HCT116 (cell line): ENCODE measurements at regions of chr7 and their contacts with region 1.

Region 1: DNA sequence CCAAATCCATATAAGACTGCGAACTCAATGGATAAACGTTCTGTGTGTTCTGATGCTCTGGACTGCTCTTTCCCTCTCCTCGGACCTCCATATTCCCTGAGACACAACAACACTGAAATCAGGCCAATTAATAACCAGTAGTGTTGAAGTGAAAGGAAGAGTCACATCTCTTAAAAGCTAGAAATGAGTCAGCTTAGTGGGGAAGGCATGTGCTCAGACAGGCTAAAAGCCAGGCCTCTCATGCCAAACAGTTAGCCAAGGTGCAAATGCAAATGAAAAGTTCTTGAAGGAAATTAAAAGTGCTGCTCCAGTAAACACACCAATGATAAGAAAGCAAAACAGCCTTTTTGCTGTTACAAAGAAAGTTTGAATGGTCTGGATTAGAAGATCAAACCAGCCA is 29.3 kb downstream of the TNS3 start:
- DNase-seq: no peak
- ATAC-seq: no peak
- H3K4me3 ChIP-seq: no peak overlapping the region
- H3K27ac ChIP-seq: no peak overlapping the region
- H3K4me1 ChIP-seq: peaks cover 27 to 33% of the 10 kb centered on the region in 2 experiments
- H3K27me3 ChIP-seq: no peaks in the 10 kb centered on the region
- CTCF ChIP-seq: no peak
- POLR2A ChIP-seq: no peak
- RAD21 ChIP-seq: no peak

Region 2: GRCh38 chr7:47100817-47101435 is 451.7 kb before region 1 on chr7:
- CTCF ChIA-PET with region 1: no interaction called
- POLR2A ChIA-PET with region 1: no interaction called
- RAD21 ChIA-PET with region 1: no interaction called
- intact Hi-C with region 1: no loop called
- DNase-seq: peak; percentile 61
- ATAC-seq: peak; percentile 98
- H3K4me3 ChIP-seq: peak overlapping the region; percentile 17 to 45; a peak in 3 of 4 replicates
- H3K27ac ChIP-seq: no peak overlapping the region
- H3K4me1 ChIP-seq: peaks cover 0 to 3% of the 10 kb centered on the region in 2 experiments; a peak in 1 of 4 replicates
- H3K27me3 ChIP-seq: no peaks in the 10 kb centered on the region
- CTCF ChIP-seq: peak; percentile 52 to 94 (median 89); a peak in 4 of 6 replicates
- POLR2A ChIP-seq: no peak
- RAD21 ChIP-seq: peak; percentile 69

Region 3: DNA sequence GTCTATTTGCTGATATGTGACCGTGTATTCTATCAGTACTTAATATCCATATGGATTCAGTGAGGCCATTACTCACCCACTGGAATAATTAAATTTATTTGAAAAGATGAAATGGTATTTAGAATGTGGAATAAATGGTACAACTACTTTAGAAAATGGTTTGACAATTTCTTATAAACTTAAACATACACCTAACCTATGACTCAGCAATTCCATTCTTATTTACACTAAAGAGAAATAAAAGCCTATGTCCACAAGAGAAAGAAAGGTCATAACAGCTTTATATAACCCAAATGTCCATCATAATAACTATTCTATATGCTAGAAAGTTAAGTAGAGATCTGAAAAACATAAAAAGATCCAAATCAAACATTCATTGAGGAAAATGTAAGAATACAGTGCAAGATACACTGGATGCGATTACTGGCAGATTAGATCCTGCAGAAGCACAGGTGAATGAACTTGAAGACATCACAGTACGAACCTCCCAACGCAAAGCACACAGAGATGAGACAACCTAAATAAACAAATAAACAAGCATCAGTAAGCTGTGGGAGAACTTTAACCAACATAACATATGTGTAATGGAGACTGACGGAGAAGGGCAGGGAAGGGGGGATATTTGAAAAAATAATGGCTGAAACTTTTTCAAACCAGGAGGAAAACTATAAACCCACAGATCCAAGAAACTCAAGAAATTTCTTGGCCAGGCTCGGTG is 22.6 kb before region 1 on chr7:
- CTCF ChIA-PET with region 1: no interaction called
- POLR2A ChIA-PET with region 1: no interaction called
- RAD21 ChIA-PET with region 1: no interaction called
- intact Hi-C with region 1: loop called (anchors 1 kb)
- DNase-seq: no peak
- ATAC-seq: no peak
- H3K4me3 ChIP-seq: no peak overlapping the region
- H3K27ac ChIP-seq: no peak overlapping the region
- H3K4me1 ChIP-seq: peaks cover 2 to 8% of the 10 kb centered on the region in 2 experiments; a peak in 2 of 4 replicates
- H3K27me3 ChIP-seq: no peaks in the 10 kb centered on the region
- CTCF ChIP-seq: no peak
- POLR2A ChIP-seq: no peak
- RAD21 ChIP-seq: no peak

Region 4: DNA sequence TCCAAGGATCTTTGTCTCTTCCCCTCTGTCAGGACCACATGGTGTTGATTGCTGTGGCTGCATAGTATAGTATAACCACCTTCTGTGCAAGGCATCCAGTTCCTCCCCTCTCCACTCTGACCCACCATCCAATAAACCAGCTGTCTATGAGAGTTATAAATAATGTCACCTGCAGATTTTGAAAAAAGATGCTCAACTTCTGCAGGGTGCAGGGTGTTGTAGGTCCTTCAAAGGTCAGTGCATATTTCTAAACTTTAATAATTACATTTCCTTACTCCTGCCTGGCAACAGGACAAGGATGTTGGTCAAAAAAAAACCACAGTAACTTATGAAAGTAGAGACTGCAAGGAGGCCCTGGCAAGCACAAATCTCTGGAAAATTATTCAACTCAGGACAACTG is 229.4 kb after region 1 on chr7:
- CTCF ChIA-PET with region 1: no interaction called
- POLR2A ChIA-PET with region 1: no interaction called
- RAD21 ChIA-PET with region 1: no interaction called
- intact Hi-C with region 1: no loop called
- DNase-seq: no peak
- ATAC-seq: no peak
- H3K4me3 ChIP-seq: no peak overlapping the region
- H3K27ac ChIP-seq: peak overlapping the region; percentile 92; the same call in 1 of the 2 replicates
- H3K4me1 ChIP-seq: peaks cover 47 to 64% of the 10 kb centered on the region in 2 experiments
- H3K27me3 ChIP-seq: no peaks in the 10 kb centered on the region
- CTCF ChIP-seq: no peak
- POLR2A ChIP-seq: no peak
- RAD21 ChIP-seq: no peak